Stomach (tissue), 19 donors: ENCODE measurements at regions of chr2 and their contacts with region 1.

Region 1: GRCh38 chr2:238459081-238459629 is 32.4 kb downstream of the ASB1 start:
- DNase-seq: peak; percentile 67 to 84
- H3K4me3 ChIP-seq: no peak overlapping the region
- H3K27ac ChIP-seq: peak overlapping the region in 2 of 5 donors; percentile 44 to 69
- H3K4me1 ChIP-seq: peaks cover 0 to 19% (median 9%) of the 10 kb centered on the region in 4 donors
- H3K27me3 ChIP-seq: no peaks in the 10 kb centered on the region
- CTCF ChIP-seq: no peak
- EP300 ChIP-seq: no peak
- POLR2A ChIP-seq: no peak

Region 2: DNA sequence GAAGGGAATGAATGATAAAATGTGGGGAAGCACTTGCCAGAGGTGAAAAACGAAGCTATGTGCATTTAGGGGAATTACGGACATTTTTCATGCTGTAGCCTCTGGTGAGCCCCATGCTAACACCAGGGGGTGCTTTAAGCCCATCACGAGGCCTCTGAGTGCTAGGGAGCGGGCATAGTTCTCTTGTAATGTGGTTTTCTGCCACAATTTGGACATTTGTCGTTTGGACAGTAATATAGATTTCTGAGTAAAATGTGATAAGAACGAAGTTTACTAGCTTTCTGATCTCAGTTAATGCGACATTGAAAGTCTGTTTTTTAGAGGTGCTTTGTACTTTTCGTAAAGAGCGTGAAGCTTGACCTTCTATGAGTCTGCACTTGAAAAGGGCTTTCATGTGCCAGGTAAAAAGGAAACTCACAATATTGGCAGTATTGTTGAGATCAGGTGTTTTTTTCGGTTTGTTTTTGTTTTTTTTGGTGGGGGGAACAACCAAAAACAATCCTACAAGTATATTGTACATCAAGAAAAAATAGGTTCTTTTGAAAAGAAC is 88.3 kb before region 1 on chr2:
- intact Hi-C with region 1: loop called (anchors 5 kb)
- DNase-seq: peak; percentile 67 to 89
- H3K4me3 ChIP-seq: no peak overlapping the region
- H3K27ac ChIP-seq: no peak overlapping the region
- H3K4me1 ChIP-seq: peaks cover 0 to 9% (median 3%) of the 10 kb centered on the region in 4 donors
- H3K27me3 ChIP-seq: no peaks in the 10 kb centered on the region
- CTCF ChIP-seq: peak in 5 of 7 experiments; percentile 57 to 86 (median 67)
- EP300 ChIP-seq: no peak
- POLR2A ChIP-seq: no peak

Region 3: DNA sequence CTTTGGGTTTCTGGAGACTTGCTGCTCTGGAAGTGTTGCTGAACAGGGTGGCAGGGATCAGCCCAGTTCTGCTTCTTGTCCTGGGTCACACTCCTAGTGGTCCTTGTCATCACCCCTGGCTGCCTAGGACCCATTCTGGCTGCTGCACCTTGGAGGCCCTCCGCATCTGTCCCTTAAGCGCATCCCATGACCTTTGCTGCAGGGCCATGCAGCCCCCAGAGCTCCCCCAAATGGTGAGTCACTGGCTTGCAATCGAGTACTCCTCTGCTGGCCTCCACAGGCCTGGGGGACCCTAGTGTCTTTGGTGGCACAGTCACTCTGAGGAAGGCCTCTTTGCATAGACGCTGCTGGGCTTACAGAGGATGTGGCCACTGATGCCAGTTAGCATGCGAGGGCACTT is 156.0 kb after region 1 on chr2:
- intact Hi-C with region 1: no loop called
- DNase-seq: no peak
- H3K4me3 ChIP-seq: no peak overlapping the region
- H3K27ac ChIP-seq: no peak overlapping the region
- H3K4me1 ChIP-seq: no peaks in the 10 kb centered on the region
- H3K27me3 ChIP-seq: no peaks in the 10 kb centered on the region
- CTCF ChIP-seq: no peak
- EP300 ChIP-seq: no peak
- POLR2A ChIP-seq: no peak